ENCODE measurements at regions of chr6 and their contacts with region 1.

Region 1: DNA sequence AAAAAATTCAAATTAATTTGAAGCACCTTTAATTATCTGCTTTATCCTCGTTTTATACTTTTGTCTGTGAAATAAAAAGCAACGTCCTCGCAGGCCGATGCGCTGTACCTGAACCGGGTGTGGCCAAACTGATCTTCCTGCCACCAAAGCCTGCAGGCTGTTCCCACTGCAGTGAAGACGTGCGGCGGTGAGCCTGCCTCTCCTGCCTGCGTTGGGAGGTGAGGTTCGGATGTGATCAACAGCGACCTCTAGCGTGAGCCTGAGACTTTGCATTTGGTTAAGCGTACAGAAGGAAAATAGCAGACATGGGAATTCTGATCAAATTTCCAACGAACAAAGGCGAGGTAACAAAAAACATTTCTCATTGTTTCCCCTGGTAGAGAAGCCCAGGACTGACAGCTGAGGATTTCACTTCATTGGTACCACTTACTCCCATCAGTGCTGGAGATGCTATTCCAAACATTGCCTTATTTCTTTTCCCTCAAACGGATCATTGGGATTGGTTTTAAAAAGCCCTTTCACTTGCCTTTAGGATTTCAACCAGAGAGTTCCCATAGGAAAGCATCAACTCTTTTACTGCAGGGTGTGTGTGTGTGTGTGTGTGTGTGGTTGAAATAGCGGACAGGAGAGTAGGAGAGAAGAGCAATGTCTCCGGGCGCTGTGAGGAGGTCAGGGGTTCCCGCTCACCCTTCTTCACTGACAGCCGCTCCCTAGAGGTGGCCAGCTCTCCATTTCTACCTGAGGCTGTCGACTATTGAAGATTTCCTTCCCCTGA is 56.6 kb upstream of the CCN6 start:
- DNase-seq: peak; percentile 93
- H3K4me3 Mint-ChIP-seq: peak overlapping the region; percentile 64
- H3K27ac Mint-ChIP-seq: no peak overlapping the region
- H3K4me1 Mint-ChIP-seq: peaks cover 40% of the 10 kb centered on the region
- H3K27me3 Mint-ChIP-seq: no peaks in the 10 kb centered on the region

Region 2: DNA sequence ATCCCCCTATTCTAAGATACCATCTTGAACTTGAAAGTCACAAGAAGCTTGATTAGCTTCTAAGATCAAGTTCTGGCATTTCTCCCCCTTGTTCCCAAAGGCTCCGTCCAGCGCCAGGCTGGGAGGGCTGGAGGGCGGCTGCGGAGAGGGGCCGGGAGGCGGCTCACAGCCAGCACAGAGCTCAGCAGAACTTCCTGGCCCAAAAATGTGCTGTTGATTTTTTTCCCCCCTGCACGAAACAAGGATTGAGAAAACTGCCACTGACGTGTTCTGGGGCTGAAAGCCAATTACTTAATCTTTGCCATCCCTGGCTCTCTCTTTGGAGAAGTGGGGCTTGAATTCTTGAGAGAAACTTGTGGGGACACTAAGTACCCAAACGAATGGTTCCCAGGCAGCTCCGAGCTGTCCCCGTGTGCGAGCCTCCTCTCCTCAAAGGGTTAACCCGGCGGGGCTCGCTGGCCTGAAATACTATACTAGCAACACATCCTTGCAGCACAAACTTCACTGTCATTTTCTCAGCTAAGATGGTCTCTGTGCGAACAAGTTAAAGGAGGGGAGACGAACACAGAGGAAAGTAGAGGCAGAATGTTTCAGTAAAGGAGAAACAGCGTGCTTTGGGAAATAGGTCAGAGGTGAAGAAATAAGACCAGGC is 392.0 kb before region 1 on chr6:
- intact Hi-C with region 1: loop called (anchors 5 kb)
- DNase-seq: peak; percentile 78
- H3K4me3 Mint-ChIP-seq: peak overlapping the region; percentile 90
- H3K27ac Mint-ChIP-seq: peak overlapping the region; percentile 99
- H3K4me1 Mint-ChIP-seq: peaks cover 30% of the 10 kb centered on the region
- H3K27me3 Mint-ChIP-seq: no peaks in the 10 kb centered on the region

Region 3: DNA sequence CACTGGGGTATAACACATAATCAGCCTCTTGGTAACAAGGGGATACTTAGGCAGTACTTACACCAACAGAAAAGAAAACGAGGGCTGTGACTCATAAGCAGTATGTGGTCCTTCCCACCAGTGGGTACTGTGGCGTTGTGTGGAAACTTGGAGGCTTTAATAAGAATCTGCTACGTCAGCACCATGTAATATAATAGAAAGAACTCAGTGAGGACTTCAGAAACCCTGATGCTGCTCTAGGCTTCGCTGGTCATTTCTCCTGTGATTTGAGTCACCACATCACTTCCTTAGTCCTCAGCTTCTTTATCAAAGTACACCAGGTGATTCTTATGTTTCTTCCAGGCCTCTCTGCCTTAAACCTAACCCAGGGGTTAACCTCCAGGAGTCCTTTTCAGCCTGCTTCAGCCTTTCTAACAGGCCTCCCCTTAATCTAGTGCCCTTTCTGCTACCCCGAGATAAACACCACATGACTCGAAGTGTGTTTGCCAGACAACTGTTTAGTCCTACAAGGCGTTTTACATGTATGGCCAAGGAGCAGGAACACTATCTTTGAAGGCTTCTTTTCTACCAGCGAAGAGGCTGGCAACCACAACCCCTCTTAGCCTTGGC is 192.5 kb before region 1 on chr6:
- intact Hi-C with region 1: loop called (anchors 1 kb)
- DNase-seq: peak; percentile 90
- H3K4me3 Mint-ChIP-seq: peak overlapping the region; percentile 82
- H3K27ac Mint-ChIP-seq: peak overlapping the region; percentile 99
- H3K4me1 Mint-ChIP-seq: peaks cover 82% of the 10 kb centered on the region
- H3K27me3 Mint-ChIP-seq: no peaks in the 10 kb centered on the region

Region 4: GRCh38 chr6:111973118-111973761 is 24.0 kb before region 1 on chr6:
- intact Hi-C with region 1: loop called (anchors 1 kb)
- DNase-seq: peak; percentile 86
- H3K4me3 Mint-ChIP-seq: peak overlapping the region; percentile 73
- H3K27ac Mint-ChIP-seq: peak overlapping the region; percentile 86
- H3K4me1 Mint-ChIP-seq: peaks cover 51% of the 10 kb centered on the region
- H3K27me3 Mint-ChIP-seq: peaks cover 7% of the 10 kb centered on the region

Region 5: GRCh38 chr6:112029045-112029822 is 32.0 kb after region 1 on chr6:
- intact Hi-C with region 1: loop called (anchors 5 kb)
- DNase-seq: peak; percentile 86
- H3K4me3 Mint-ChIP-seq: peak overlapping the region; percentile 0
- H3K27ac Mint-ChIP-seq: peak overlapping the region; percentile 93
- H3K4me1 Mint-ChIP-seq: peaks cover 56% of the 10 kb centered on the region
- H3K27me3 Mint-ChIP-seq: no peaks in the 10 kb centered on the region